MCF 10A (cell line): ENCODE measurements at regions of chr1 and their contacts with region 1.

Region 1: GRCh38 chr1:239960366-239960765 is 131.3 kb upstream of the FMN2 start:
- DNase-seq: no peak
- H3K4me3 Mint-ChIP-seq: no peak overlapping the region
- H3K27ac Mint-ChIP-seq: no peak overlapping the region
- H3K4me1 Mint-ChIP-seq: peaks cover 4% of the 10 kb centered on the region
- H3K27me3 Mint-ChIP-seq: peaks cover 40% of the 10 kb centered on the region
- CTCF ChIP-seq: no peak

Region 2: GRCh38 chr1:239987103-239987745 is 26.9 kb after region 1 on chr1:
- CTCF ChIA-PET with region 1: interaction called, 213 read pairs
- POLR2A ChIA-PET with region 1: no interaction called
- intact Hi-C with region 1: no loop called
- DNase-seq: peak; percentile 75
- H3K4me3 Mint-ChIP-seq: no peak overlapping the region
- H3K27ac Mint-ChIP-seq: no peak overlapping the region
- H3K4me1 Mint-ChIP-seq: no peaks in the 10 kb centered on the region
- H3K27me3 Mint-ChIP-seq: no peaks in the 10 kb centered on the region
- CTCF ChIP-seq: peak; percentile 97